ENCODE measurements at regions of chr18 and their contacts with region 1.

Region 1: DNA sequence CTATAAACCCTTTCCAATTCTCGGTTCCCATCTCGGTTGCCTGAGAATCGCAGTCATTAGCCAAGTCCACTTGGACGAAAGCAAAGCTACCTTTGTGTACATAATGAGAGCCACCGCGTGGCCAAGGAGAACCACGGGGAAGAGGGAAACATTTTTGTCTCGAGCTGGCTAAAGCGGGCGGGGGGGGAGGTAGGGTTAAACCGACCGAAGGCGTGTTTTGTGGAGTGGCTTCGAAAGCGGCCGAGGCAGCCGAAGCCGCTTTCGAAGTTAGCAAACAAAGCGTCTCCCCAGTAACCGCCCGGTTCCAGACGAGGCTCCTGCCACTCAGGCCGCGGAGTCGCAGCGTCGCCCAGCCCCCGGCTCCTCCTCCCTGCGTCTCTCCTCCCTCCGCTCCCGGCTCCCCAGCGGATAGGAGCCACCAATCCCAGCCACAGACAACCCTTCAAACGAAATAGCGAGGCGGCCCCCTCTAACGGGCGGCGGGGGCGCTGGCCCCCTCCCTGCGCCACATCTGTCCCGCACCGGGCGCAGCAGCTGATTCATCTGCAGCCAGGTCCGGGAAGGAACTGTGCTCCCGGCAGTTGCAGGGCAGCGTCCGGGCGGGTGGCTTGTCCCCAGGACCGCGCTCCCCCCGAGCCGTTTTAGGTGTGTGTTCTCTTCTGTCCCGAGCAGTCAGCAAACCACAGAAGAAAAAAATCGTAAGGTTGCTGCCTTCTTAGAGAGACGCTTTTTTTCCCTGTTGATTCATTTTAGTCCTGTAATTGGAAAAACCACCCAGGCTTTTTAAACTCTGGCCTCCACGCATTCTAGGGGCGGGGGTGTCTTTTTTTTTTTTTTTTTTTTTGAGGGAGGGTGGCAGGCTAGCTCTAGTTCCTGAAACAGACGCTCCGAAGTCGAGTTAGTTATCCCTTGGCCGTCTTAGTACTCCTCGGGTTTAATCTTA is 1.8 kb upstream of the TGIF1 start:
- DNase-seq: peak; percentile 99
- H3K4me3 ChIP-seq: peak overlapping the region; percentile 59 to 90 (median 81)
- H3K27ac ChIP-seq: peak overlapping the region; percentile 99
- H3K4me1 ChIP-seq: peaks cover 21% of the 10 kb centered on the region
- H3K27me3 ChIP-seq: no peaks in the 10 kb centered on the region
- CTCF ChIP-seq: peak in 1 of 2 donors; percentile 13
- POLR2A ChIP-seq: peak; percentile 80

Region 2: DNA sequence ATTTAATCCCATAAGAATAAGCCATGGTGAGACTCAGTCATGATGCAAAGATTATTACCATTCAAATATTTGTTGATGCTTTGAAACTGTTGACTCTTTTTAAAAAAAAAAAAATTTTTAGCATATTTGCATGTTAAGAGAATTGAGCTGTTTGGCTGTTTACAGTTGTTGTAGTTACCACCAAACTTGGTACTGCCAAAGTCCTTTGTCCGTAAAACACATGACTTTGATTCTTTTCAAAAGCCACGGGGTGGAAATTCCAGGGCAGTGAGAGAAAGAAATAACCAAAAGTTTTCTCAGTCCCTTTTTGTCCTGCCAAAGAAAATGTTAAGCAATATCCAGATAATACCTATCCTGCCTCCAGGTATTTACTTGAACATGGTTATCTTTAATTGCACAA is 1351.6 kb before region 1 on chr18:
- CTCF ChIA-PET with region 1: no interaction called
- POLR2A ChIA-PET with region 1: no interaction called
- dilution Hi-C with region 1: no loop called
- intact Hi-C with region 1: no loop called
- DNase-seq: no peak
- H3K4me3 ChIP-seq: no peak overlapping the region
- H3K27ac ChIP-seq: no peak overlapping the region
- H3K4me1 ChIP-seq: no peaks in the 10 kb centered on the region
- H3K27me3 ChIP-seq: no peaks in the 10 kb centered on the region
- CTCF ChIP-seq: no peak
- POLR2A ChIP-seq: no peak

Region 3: DNA sequence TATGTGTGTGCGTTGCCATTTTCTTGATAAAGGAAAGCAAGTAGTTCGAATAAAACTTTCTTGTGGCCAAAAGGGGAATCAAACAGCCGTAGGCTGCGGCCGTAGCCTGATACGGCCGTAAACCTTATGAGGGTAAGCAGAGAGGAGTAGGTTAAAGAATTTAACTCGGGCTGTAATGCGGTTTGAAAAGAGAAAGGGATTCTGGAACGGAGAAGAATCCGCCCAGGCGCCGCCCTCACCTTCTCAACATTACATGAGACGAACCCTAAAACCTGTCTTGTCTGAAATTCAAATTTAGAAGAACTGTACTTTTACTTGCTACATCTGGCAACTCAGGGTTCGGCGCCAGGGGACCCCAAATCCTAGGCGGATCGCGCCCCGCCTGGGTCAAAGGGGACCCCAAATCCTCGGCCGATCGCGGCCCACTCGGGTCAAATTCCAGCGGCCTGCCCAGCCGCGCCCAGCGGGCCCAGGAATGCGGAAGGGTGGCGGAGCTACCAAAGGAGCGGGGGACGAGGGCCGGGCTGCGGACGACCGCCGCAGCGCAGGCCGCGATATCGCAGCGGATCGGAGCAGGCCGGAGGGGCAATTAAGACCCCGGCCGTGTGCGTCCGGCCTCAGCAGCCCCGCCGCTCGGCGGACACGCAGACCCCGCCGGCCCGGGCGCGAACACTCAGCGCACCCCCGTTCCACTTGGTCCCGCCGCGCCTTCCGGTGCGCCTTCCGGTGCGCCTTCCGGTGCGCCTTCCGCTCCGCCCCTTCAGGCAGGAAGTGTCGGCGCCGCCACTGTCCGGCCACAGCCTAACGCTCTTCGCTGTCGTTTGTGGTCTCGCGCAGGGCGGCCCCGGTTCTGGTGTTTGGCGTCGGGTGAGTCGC is 186.6 kb before region 1 on chr18 and contains the start of gene MYL12B:
- CTCF ChIA-PET with region 1: no interaction called
- POLR2A ChIA-PET with region 1: no interaction called
- dilution Hi-C with region 1: loop called (anchors 25 kb)
- intact Hi-C with region 1: loop called (anchors 5 kb)
- DNase-seq: peak; percentile 80
- H3K4me3 ChIP-seq: peak within 1 kb of the TSS; percentile 93 to 100 (median 97)
- H3K27ac ChIP-seq: peak within 1 kb of the TSS; percentile 94
- H3K4me1 ChIP-seq: peaks cover 36% of the 10 kb centered on the region
- H3K27me3 ChIP-seq: no peaks in the 10 kb centered on the region
- CTCF ChIP-seq: no peak
- POLR2A ChIP-seq: peak; percentile 75
- total RNA-seq, gene MYL12B: 634 and 638 TPM in 2 replicates

Region 4: GRCh38 chr18:3397071-3397745 is 51.0 kb before region 1 on chr18:
- CTCF ChIA-PET with region 1: no interaction called
- POLR2A ChIA-PET with region 1: no interaction called
- dilution Hi-C with region 1: no loop called
- intact Hi-C with region 1: no loop called
- DNase-seq: no peak
- H3K4me3 ChIP-seq: no peak overlapping the region
- H3K27ac ChIP-seq: no peak overlapping the region
- H3K4me1 ChIP-seq: no peaks in the 10 kb centered on the region
- H3K27me3 ChIP-seq: peaks cover 0 to 2% of the 10 kb centered on the region in 2 experiments
- CTCF ChIP-seq: no peak
- POLR2A ChIP-seq: no peak

Region 5: GRCh38 chr18:3481696-3482210 is 33.6 kb after region 1 on chr18:
- CTCF ChIA-PET with region 1: interaction called, 17 read pairs
- POLR2A ChIA-PET with region 1: no interaction called
- dilution Hi-C with region 1: no loop called
- intact Hi-C with region 1: no loop called
- DNase-seq: peak; percentile 47
- H3K4me3 ChIP-seq: no peak overlapping the region
- H3K27ac ChIP-seq: no peak overlapping the region
- H3K4me1 ChIP-seq: peaks cover 4% of the 10 kb centered on the region
- H3K27me3 ChIP-seq: no peaks in the 10 kb centered on the region
- CTCF ChIP-seq: peak; percentile 53 to 55
- POLR2A ChIP-seq: no peak

Region 6: GRCh38 chr18:3604498-3605408 is 156.6 kb after region 1 on chr18:
- CTCF ChIA-PET with region 1: interaction called, 7 read pairs
- POLR2A ChIA-PET with region 1: interaction called, 15 read pairs
- dilution Hi-C with region 1: no loop called
- intact Hi-C with region 1: loop called (anchors 2 kb)
- DNase-seq: peak; percentile 90
- H3K4me3 ChIP-seq: peak overlapping the region; percentile 41 to 95 (median 83)
- H3K27ac ChIP-seq: peak overlapping the region; percentile 96
- H3K4me1 ChIP-seq: peaks cover 43% of the 10 kb centered on the region
- H3K27me3 ChIP-seq: no peaks in the 10 kb centered on the region
- CTCF ChIP-seq: no peak
- POLR2A ChIP-seq: peak; percentile 32

Region 7: GRCh38 chr18:3710712-3711269 is 262.6 kb after region 1 on chr18:
- CTCF ChIA-PET with region 1: no interaction called
- POLR2A ChIA-PET with region 1: no interaction called
- dilution Hi-C with region 1: no loop called
- intact Hi-C with region 1: loop called (anchors 1 kb)
- DNase-seq: peak; percentile 96
- H3K4me3 ChIP-seq: no peak overlapping the region
- H3K27ac ChIP-seq: peak overlapping the region; percentile 90
- H3K4me1 ChIP-seq: peaks cover 27% of the 10 kb centered on the region
- H3K27me3 ChIP-seq: no peaks in the 10 kb centered on the region
- CTCF ChIP-seq: no peak
- POLR2A ChIP-seq: peak; percentile 93

Region 8: DNA sequence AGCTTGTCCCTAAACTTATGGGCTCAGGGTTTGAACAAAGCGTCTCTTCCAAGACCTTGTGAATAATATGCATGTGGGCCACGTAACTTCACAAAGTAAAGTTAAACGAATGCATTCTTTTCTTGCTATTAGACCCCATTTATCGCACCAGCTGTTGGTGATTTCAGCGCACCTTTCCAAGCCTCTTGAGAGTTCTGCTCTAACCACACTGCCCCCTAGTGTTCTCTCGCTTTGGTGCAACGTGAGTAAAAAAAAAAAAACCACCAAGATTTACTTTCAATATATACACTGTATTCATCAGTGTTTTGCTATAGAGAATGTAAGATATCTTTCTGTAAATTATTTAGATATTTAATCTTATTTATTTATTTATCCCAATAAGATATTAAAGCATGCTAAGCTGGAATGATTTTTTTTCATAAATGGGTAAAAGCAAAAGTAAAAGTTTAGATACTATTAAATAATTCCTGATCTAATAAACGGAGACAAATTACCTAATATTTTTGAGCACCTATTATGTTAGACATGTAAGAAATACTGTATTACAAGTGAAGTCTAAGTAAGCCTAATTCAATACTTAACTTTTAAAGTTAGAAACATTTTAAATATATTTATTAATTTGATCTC is 547.4 kb after region 1 on chr18:
- CTCF ChIA-PET with region 1: interaction called, 3 read pairs
- POLR2A ChIA-PET with region 1: no interaction called
- dilution Hi-C with region 1: no loop called
- intact Hi-C with region 1: loop called (anchors 5 kb)
- DNase-seq: peak; percentile 78
- H3K4me3 ChIP-seq: no peak overlapping the region
- H3K27ac ChIP-seq: no peak overlapping the region
- H3K4me1 ChIP-seq: no peaks in the 10 kb centered on the region
- H3K27me3 ChIP-seq: no peaks in the 10 kb centered on the region
- CTCF ChIP-seq: peak; percentile 75 to 85
- POLR2A ChIP-seq: no peak

Measured in endothelial cell of umbilical vein (primary cell).